ENCODE measurements at regions of chrX and their contacts with region 1.

Region 1: DNA sequence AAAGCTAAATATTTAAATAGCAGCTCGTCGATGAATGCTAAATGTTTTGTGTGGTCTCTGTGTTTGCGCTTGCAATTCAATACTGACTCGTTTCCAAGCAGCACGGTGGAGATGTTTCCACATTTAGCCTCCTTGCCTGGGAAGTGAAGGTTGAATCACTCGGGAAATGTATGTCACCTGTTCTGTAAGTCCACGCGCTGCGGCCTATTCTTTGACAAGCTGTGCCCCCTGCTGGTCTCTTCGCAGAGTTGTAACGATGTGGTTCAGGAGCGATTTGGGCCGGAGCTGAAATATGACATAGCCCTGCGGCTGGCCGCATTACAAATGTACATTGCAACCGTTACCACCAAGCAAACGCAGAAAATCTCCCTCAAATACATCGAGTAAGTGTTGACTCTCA is 89.6 kb upstream of the PRPS2 start:
- DNase-seq: peak; percentile 12
- ATAC-seq: peak; percentile 98
- H3K4me3 ChIP-seq: no peak overlapping the region
- H3K27ac ChIP-seq: no peak overlapping the region
- H3K4me1 ChIP-seq: no peaks in the 10 kb centered on the region
- H3K27me3 ChIP-seq: no peaks in the 10 kb centered on the region
- CTCF ChIP-seq: peak; percentile 70 to 84 (median 71)
- EP300 ChIP-seq: no peak
- POLR2A ChIP-seq: no peak
- RAD21 ChIP-seq: peak; percentile 86

Region 2: DNA sequence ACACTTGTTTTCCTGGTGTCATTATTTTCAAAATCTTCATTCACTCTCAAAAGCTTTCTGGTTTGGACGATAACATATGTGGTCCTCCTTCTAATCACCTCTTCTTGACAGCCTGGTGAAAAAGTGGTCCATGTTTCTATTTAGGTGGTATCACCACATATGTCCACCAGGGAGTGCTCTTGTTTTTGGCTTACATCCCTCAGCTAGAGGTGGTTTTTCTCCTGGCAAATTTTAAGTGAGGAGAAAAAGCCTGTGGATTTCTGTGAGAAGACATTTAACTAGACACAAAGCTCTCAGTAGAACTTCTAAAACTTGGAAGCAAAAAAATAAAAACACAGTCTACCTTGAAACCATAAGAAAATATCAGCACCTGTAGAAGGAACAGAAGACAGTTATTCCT is 621.4 kb before region 1 on chrX:
- CTCF ChIA-PET with region 1: interaction called, 18 read pairs
- POLR2A ChIA-PET with region 1: no interaction called
- RAD21 ChIA-PET with region 1: interaction called, 12 read pairs
- SMC1A ChIA-PET with region 1: interaction called, 16 read pairs
- in situ Hi-C with region 1: no loop called
- intact Hi-C with region 1: loop called (anchors 1 kb)
- DNase-seq: no peak
- ATAC-seq: peak; percentile 66
- H3K4me3 ChIP-seq: no peak overlapping the region
- H3K27ac ChIP-seq: no peak overlapping the region
- H3K4me1 ChIP-seq: no peaks in the 10 kb centered on the region
- H3K27me3 ChIP-seq: no peaks in the 10 kb centered on the region; a peak in 1 of 4 replicates
- CTCF ChIP-seq: peak; percentile 49 to 55 (median 54); a peak in 5 of 6 replicates
- EP300 ChIP-seq: no peak
- POLR2A ChIP-seq: no peak
- RAD21 ChIP-seq: peak; percentile 76

Region 3: GRCh38 chrX:12497832-12498591 is 203.6 kb before region 1 on chrX:
- CTCF ChIA-PET with region 1: interaction called, 24 read pairs
- POLR2A ChIA-PET with region 1: no interaction called
- RAD21 ChIA-PET with region 1: interaction called, 8 read pairs
- SMC1A ChIA-PET with region 1: interaction called, 5 read pairs
- in situ Hi-C with region 1: no loop called
- intact Hi-C with region 1: loop called (anchors 1 kb)
- DNase-seq: no peak
- ATAC-seq: peak; percentile 93
- H3K4me3 ChIP-seq: no peak overlapping the region
- H3K27ac ChIP-seq: no peak overlapping the region
- H3K4me1 ChIP-seq: no peaks in the 10 kb centered on the region; the same call in 1 of the 2 replicates
- H3K27me3 ChIP-seq: no peaks in the 10 kb centered on the region
- CTCF ChIP-seq: peak; percentile 56 to 76 (median 69)
- EP300 ChIP-seq: no peak
- POLR2A ChIP-seq: no peak
- RAD21 ChIP-seq: peak; percentile 54

Region 4: GRCh38 chrX:12567857-12568256 is 133.8 kb before region 1 on chrX:
- CTCF ChIA-PET with region 1: interaction called, 10 read pairs
- POLR2A ChIA-PET with region 1: no interaction called
- RAD21 ChIA-PET with region 1: interaction called, 4 read pairs
- SMC1A ChIA-PET with region 1: interaction called, 6 read pairs
- in situ Hi-C with region 1: no loop called
- intact Hi-C with region 1: loop called (anchors 5 kb)
- DNase-seq: no peak
- ATAC-seq: 0 out of 3 replicates have a peak, but pooled peaks have one; percentile 18
- H3K4me3 ChIP-seq: no peak overlapping the region
- H3K27ac ChIP-seq: no peak overlapping the region
- H3K4me1 ChIP-seq: no peaks in the 10 kb centered on the region; the same call in 1 of the 2 replicates
- H3K27me3 ChIP-seq: no peaks in the 10 kb centered on the region; a peak in 1 of 4 replicates
- CTCF ChIP-seq: peak; percentile 65 to 74 (median 67)
- EP300 ChIP-seq: no peak
- POLR2A ChIP-seq: no peak
- RAD21 ChIP-seq: peak; percentile 56

Region 5: GRCh38 chrX:12690646-12691045 is 11.0 kb before region 1 on chrX:
- CTCF ChIA-PET with region 1: interaction called, 32 read pairs
- POLR2A ChIA-PET with region 1: no interaction called
- RAD21 ChIA-PET with region 1: interaction called, 5 read pairs
- SMC1A ChIA-PET with region 1: interaction called, 7 read pairs
- in situ Hi-C with region 1: no loop called
- intact Hi-C with region 1: no loop called
- DNase-seq: no peak
- ATAC-seq: no peak
- H3K4me3 ChIP-seq: no peak overlapping the region
- H3K27ac ChIP-seq: no peak overlapping the region
- H3K4me1 ChIP-seq: no peaks in the 10 kb centered on the region
- H3K27me3 ChIP-seq: peaks cover 0 to 7% of the 10 kb centered on the region in 2 experiments; a peak in 3 of 4 replicates
- CTCF ChIP-seq: no peak
- EP300 ChIP-seq: no peak
- POLR2A ChIP-seq: no peak
- RAD21 ChIP-seq: no peak

Region 6: GRCh38 chrX:12901486-12901885 is 199.9 kb after region 1 on chrX:
- CTCF ChIA-PET with region 1: interaction called, 30 read pairs
- POLR2A ChIA-PET with region 1: no interaction called
- RAD21 ChIA-PET with region 1: interaction called, 11 read pairs
- SMC1A ChIA-PET with region 1: interaction called, 8 read pairs
- in situ Hi-C with region 1: loop called (anchors 5 kb)
- intact Hi-C with region 1: loop called (anchors 1 kb)
- DNase-seq: no peak
- ATAC-seq: peak; percentile 93
- H3K4me3 ChIP-seq: no peak overlapping the region
- H3K27ac ChIP-seq: no peak overlapping the region
- H3K4me1 ChIP-seq: no peaks in the 10 kb centered on the region
- H3K27me3 ChIP-seq: no peaks in the 10 kb centered on the region
- CTCF ChIP-seq: peak; percentile 68 to 84 (median 75)
- EP300 ChIP-seq: no peak
- POLR2A ChIP-seq: no peak
- RAD21 ChIP-seq: peak; percentile 80